Heart left ventricle (tissue), 16 donors: ENCODE measurements at regions of chr2 and their contacts with region 1.

Region 1: GRCh38 chr2:106115250-106115649 is 78.9 kb downstream of the UXS1 start:
- DNase-seq: no peak
- ATAC-seq: no peak
- H3K4me3 ChIP-seq: no peak overlapping the region
- H3K27ac ChIP-seq: no peak overlapping the region
- H3K4me1 ChIP-seq: peaks cover 0 to 33% (median 3%) of the 10 kb centered on the region in 12 donors
- H3K27me3 ChIP-seq: no peaks in the 10 kb centered on the region
- CTCF ChIP-seq: no peak
- POLR2A ChIP-seq: no peak

Region 2: DNA sequence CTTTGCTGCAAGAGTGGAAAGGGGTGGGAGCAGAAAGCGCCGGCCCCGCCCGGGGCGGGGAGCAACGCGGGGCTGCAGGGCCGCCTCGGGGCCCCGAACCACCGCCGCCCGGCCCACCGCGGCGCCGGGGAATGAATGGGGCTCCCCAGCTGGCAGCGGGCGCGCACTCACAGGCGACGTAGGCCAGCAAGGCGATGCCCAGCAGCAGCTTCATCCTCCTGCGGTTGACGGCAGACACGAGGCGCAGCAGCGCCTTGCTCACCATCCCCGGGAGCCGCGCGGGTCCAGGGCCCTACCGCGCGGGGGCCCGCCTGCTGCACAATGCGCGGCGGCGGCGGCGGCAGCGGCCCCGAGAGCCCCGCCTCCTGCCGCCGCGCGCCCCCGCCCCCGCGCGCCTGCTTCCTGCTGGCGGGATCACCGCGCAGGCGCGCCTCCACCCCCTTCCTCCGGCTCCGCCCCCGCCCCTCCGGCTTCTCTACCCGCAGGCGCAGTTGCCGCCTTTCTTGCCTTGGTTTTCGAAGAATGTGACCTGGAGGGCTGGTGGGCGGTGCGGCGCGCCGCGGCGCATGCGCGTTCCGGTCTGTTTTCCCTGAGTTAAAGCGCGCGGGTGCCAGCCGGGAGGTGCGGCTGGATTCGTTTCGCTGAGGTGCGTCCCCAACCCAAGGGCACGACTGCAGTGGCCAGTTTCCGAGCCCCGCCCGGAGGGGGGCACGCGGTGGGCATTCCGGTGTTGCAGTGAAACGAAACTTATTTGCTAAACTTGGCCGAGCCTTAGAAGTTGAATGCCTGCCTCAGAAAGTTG is 78.9 kb after region 1 on chr2 and contains the start of gene UXS1:
- intact Hi-C with region 1: loop called in 2 of 10 experiments (anchors 5 kb)
- DNase-seq: peak; percentile 97 to 99 (median 98)
- ATAC-seq: peak; percentile 94 to 98 (median 96)
- H3K4me3 ChIP-seq: peak within 1 kb of the TSS; percentile 83 to 98 (median 92)
- H3K27ac ChIP-seq: peak within 1 kb of the TSS; percentile 43 to 96 (median 88)
- H3K4me1 ChIP-seq: peaks cover 0 to 39% (median 13%) of the 10 kb centered on the region in 12 donors
- H3K27me3 ChIP-seq: no peaks in the 10 kb centered on the region
- CTCF ChIP-seq: peak in 1 of 12 donors; percentile 4
- POLR2A ChIP-seq: peak in 1 of 2 donors; percentile 73
- total RNA-seq, gene UXS1: 20.7 to 36.9 (median 30.9) TPM

Region 3: DNA sequence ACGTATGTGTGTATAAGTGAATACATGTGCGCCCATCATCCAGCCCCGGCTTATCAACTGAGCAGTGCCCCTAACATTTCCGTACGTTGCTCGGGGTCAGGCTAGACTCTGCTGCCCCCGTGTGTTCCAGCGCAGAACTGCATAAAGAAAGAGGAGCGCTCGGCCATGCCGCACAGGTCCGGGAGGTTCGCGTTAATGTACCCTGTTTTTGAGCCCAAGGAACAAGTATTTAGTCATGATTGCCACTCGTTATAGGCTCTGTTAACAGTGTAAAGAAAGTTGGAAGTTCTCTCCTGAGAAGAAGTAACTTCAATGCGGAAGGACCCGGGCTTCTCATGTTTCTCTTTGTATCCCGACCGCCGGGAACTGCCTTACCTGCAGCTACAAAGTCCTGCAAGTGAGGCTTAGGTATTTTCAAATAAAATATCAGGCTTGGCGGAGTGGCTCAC is 427.6 kb after region 1 on chr2:
- intact Hi-C with region 1: loop called in 1 of 10 experiments (anchors 5 kb)
- DNase-seq: peak; percentile 45 to 71 (median 61)
- ATAC-seq: peak; percentile 58 to 88 (median 80)
- H3K4me3 ChIP-seq: peak overlapping the region in 9 of 12 donors; percentile 18 to 38 (median 29)
- H3K27ac ChIP-seq: no peak overlapping the region
- H3K4me1 ChIP-seq: peaks cover 0 to 22% (median 0%) of the 10 kb centered on the region in 12 donors
- H3K27me3 ChIP-seq: peaks cover 0 to 23% (median 4%) of the 10 kb centered on the region in 9 donors
- CTCF ChIP-seq: peak; percentile 83 to 98 (median 92)
- POLR2A ChIP-seq: no peak